ENCODE measurements at regions of chrX and their contacts with region 1.

Region 1: DNA sequence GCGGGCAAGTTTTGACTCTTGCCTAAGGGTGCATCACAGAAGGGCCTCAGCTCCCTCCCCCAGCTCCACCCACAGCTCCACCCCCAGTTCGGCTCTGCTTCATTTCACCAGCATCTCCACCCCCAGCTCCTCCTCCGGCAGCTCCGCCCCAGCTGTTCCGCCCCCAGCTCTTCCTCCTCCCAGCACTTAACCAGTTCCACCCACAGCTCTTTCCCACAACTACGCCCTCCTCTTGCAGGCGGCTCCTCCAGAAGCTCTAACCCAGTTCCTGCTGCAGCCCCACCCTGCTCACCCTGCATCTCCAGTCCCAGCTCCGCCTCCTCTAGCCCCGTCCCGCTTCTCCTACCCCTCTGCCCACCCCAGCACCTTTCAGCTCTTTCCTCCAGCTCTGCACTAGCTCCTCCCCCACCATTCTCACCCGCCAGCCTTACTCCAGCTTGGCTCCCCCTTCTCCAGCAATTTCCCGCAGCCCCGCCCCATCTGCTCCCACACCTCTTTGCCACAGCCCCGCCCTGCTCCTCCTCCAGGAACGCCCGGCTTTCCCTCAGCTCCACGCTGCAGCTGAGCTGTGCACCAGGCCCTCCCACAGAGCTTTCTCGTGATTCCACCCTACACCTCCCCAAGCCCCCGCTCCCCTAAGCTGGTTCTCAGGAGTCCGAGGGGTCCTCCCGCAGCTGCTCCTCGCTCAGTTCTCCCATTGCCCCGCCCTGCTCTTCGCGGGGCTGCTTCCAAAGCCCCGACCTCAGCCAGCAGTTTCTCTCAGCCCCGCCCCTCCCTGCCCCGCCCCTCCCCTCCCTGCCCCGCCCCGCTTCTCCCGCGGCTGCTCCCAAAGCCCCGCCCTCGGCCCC is 1.3 kb upstream of the EOLA1 start:
- DNase-seq: peak; percentile 85
- H3K4me3 Mint-ChIP-seq: peak overlapping the region; percentile 80
- H3K27ac Mint-ChIP-seq: peak overlapping the region; percentile 99
- H3K4me1 Mint-ChIP-seq: no peaks in the 10 kb centered on the region
- H3K27me3 Mint-ChIP-seq: no peaks in the 10 kb centered on the region
- CTCF ChIP-seq: no peak

Region 2: GRCh38 chrX:149504915-149505651 is 34.4 kb before region 1 on chrX and contains the start of gene IDS:
- CTCF ChIA-PET with region 1: interaction called, 3 read pairs
- POLR2A ChIA-PET with region 1: interaction called, 20 read pairs
- intact Hi-C with region 1: no loop called
- DNase-seq: peak; percentile 86
- H3K4me3 Mint-ChIP-seq: peak within 1 kb of the TSS; percentile 77
- H3K27ac Mint-ChIP-seq: peak within 1 kb of the TSS; percentile 66
- H3K4me1 Mint-ChIP-seq: peaks cover 12% of the 10 kb centered on the region
- H3K27me3 Mint-ChIP-seq: no peaks in the 10 kb centered on the region
- CTCF ChIP-seq: no peak
- total RNA-seq, gene IDS: 29.9 and 40.2 TPM in 2 replicates

Region 3: DNA sequence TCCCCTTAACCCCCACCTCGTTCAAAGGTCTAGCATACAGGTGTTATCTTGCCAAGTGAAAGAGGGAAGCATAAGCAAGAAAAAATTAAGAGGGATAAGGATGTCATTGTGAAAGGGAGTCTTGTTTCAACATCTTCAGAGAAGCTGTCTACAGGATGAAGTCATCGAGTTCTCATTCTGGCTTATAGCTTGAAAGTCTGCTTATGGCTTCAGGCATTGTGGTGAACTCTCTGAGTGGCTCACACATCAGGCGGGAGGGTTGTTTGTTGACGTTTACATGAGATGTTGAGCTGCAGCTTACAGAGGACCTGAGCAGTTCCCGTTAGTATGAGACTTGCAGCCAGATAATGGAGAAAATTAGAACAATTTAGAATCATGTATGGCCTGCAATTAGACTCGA is 31.2 kb after region 1 on chrX:
- CTCF ChIA-PET with region 1: no interaction called
- POLR2A ChIA-PET with region 1: interaction called, 17 read pairs
- intact Hi-C with region 1: no loop called
- DNase-seq: peak; percentile 72
- H3K4me3 Mint-ChIP-seq: no peak overlapping the region
- H3K27ac Mint-ChIP-seq: no peak overlapping the region
- H3K4me1 Mint-ChIP-seq: no peaks in the 10 kb centered on the region
- H3K27me3 Mint-ChIP-seq: no peaks in the 10 kb centered on the region
- CTCF ChIP-seq: no peak

Region 4: GRCh38 chrX:149799938-149800337 is 260.4 kb after region 1 on chrX:
- CTCF ChIA-PET with region 1: no interaction called
- POLR2A ChIA-PET with region 1: no interaction called
- intact Hi-C with region 1: no loop called
- DNase-seq: no peak
- H3K4me3 Mint-ChIP-seq: no peak overlapping the region
- H3K27ac Mint-ChIP-seq: no peak overlapping the region
- H3K4me1 Mint-ChIP-seq: no peaks in the 10 kb centered on the region
- H3K27me3 Mint-ChIP-seq: no peaks in the 10 kb centered on the region
- CTCF ChIP-seq: no peak

Region 5: DNA sequence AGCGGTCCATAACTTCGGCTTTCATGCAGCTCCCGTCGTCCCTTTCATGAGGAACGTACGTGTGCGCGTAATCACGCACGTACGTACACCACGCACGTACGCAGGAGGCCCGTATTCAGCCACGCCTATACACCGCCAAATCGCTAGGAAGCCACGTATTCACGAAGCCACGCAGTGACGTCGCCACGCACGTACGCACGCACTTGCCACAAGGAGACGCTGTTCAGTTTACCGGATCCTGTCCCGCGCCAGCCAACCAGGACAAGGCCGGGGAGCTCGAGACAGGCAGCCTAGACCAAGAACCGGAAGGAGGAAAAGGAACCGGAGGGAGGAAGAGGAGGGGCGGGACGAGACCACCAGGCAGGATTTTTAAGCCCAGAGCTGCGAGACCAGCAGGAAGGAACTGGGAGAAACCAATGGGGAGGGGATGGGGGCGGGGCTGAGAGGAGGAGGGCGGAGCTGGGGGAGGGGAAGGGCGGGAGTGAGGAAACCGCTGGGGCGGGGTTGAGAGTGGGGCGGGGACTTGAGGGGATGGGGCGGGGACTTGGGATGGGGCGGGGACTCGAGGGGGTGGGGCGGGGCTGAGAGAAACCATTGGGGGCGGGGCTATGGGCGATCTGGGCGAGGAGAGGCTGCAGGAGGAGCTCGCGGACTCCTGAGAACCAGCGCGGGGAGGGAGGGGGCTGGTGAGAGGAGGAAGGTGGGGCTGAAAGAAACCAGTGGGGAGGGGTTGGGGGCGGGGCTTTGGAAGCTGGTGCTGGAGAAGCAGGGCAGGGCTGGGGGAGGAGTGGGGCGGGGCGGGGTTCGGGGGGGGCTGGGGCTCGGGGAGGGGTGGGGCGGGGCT is 399.1 kb after region 1 on chrX and contains the start of gene EOLA2:
- CTCF ChIA-PET with region 1: no interaction called
- POLR2A ChIA-PET with region 1: interaction called, 58 read pairs
- intact Hi-C with region 1: no loop called
- DNase-seq: peak; percentile 95
- H3K4me3 Mint-ChIP-seq: peak within 1 kb of the TSS; percentile 84
- H3K27ac Mint-ChIP-seq: peak within 1 kb of the TSS; percentile 100
- H3K4me1 Mint-ChIP-seq: no peaks in the 10 kb centered on the region
- H3K27me3 Mint-ChIP-seq: peaks cover 9% of the 10 kb centered on the region
- CTCF ChIP-seq: peak; percentile 13
- total RNA-seq, gene EOLA2: 47.4 and 52.8 TPM in 2 replicates

Measured in MCF 10A (cell line).